CD4-positive, alpha-beta T cell (primary cell): ENCODE measurements at regions of chr11 and their contacts with region 1.

Region 1: GRCh38 chr11:47176328-47177228 is at the start of gene ARFGAP2:
- DNase-seq: peak; percentile 89 to 99 (median 95)
- ATAC-seq: peak; percentile 88
- H3K4me3 ChIP-seq: peak within 1 kb of the TSS; percentile 100
- H3K4me3 Mint-ChIP-seq: peak within 1 kb of the TSS; percentile 99
- H3K27ac ChIP-seq: peak within 1 kb of the TSS; percentile 90 to 96
- H3K27ac Mint-ChIP-seq: peak within 1 kb of the TSS; percentile 97
- H3K4me1 ChIP-seq: peaks cover 56% of the 10 kb centered on the region
- H3K4me1 Mint-ChIP-seq: peaks cover 54% of the 10 kb centered on the region
- H3K27me3 ChIP-seq: no peaks in the 10 kb centered on the region
- H3K27me3 Mint-ChIP-seq: peaks cover 5% of the 10 kb centered on the region
- CTCF ChIP-seq: no peak
- total RNA-seq, gene ARFGAP2: 161 to 174 TPM

Region 2: DNA sequence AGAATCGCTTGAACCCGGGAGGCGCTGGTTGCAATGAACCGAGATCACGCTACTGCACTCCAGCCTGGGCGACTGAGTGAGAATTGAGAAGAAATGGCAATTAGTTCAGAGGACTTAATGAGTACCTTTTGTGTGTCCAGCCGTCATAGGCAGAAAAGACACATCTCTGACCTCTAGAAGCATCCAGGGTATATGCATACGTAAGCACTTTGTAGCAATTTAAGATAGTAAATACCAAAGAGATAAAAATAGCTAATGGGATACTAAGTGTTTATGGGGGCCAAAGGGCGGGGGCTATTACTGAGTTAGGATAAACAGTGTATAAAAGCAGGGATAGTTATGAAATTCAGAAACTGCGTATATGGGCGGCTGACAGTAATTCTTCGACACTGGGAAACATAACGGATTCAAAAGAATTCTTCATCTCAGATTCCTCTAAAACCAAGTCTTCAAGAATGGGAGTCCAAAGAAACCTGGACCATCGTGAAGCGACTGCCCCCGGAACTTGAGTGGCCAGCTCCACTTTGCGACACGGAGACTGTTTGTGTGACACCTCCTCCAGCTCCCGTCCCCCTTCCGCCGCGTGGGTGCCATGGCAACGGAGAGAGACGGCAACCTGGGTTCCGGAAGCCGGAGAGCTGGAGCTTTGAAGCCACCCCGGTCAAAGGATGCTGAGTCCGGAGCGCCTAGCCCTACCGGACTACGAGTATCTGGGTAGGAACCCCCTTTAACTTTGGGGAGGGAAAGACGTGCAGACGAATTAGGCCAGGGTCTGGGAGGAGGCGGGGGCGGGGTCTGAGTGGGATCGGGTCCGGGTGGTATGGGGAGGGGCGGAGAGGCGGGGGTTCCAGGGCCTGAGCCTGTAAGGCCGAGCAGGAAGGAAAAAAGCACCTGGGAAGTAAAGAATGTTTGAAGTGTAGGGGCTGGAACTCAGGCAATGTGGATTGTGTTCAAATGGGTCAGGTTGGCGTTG is 240.2 kb before region 1 on chr11 and contains the start of gene CSTPP1:
- CTCF ChIA-PET with region 1: no interaction called
- POLR2A ChIA-PET with region 1: no interaction called
- intact Hi-C with region 1: loop called in 1 of 2 experiments (anchors 2 kb)
- DNase-seq: peak; percentile 87 to 95 (median 92)
- ATAC-seq: peak; percentile 96
- H3K4me3 ChIP-seq: peak within 1 kb of the TSS; percentile 73
- H3K4me3 Mint-ChIP-seq: peak within 1 kb of the TSS; percentile 91
- H3K27ac ChIP-seq: peak within 1 kb of the TSS; percentile 28 to 39
- H3K27ac Mint-ChIP-seq: peak within 1 kb of the TSS; percentile 83
- H3K4me1 ChIP-seq: peaks cover 18% of the 10 kb centered on the region
- H3K4me1 Mint-ChIP-seq: peaks cover 22% of the 10 kb centered on the region
- H3K27me3 ChIP-seq: peaks cover 0 to 3% of the 10 kb centered on the region in 2 experiments
- H3K27me3 Mint-ChIP-seq: peaks cover 8% of the 10 kb centered on the region
- CTCF ChIP-seq: no peak
- total RNA-seq, gene CSTPP1: 6.6 to 7.3 TPM

Region 3: GRCh38 chr11:47056261-47056915 is 120.2 kb before region 1 on chr11:
- CTCF ChIA-PET with region 1: no interaction called
- POLR2A ChIA-PET with region 1: no interaction called
- intact Hi-C with region 1: no loop called
- DNase-seq: no peak
- ATAC-seq: no peak
- H3K4me3 ChIP-seq: no peak overlapping the region
- H3K4me3 Mint-ChIP-seq: no peak overlapping the region
- H3K27ac ChIP-seq: no peak overlapping the region
- H3K27ac Mint-ChIP-seq: no peak overlapping the region
- H3K4me1 ChIP-seq: no peaks in the 10 kb centered on the region
- H3K4me1 Mint-ChIP-seq: no peaks in the 10 kb centered on the region
- H3K27me3 ChIP-seq: no peaks in the 10 kb centered on the region
- H3K27me3 Mint-ChIP-seq: no peaks in the 10 kb centered on the region
- CTCF ChIP-seq: no peak

Region 4: DNA sequence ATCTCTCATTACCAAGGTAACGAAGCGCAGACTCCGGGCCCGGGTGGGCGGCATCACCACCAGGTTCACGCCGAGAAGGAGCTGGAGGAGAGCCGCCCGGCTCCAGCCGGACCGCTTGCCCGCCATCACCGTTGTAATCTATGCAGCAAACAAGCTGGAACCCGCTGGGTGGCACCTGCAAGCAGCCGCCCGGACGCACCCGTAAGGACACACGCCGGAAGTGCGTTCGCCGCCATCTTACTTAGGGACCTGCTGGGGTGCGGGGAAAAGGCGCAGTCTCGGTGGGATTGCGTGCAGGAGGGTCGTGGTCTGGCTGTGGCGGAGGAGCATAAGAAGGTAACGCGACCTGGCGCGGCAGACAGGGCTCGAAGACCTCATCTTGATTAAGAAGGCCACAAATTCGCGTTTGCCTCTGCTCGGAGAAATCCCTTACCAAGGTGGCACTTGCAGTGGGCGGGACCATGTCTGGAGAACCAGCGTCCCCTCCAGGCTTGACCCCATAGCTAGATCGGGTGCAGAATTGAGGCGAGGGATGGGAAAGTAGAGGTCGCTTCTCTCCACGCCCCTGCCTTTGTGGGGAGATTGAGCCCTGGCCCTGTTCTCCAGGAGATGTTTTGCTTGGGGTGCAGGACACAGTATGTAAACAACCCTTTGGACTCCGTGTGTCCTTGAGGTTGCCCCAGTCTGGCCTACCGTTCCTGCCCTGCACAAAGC is 72.2 kb after region 1 on chr11 and contains the start of gene ACP2:
- CTCF ChIA-PET with region 1: no interaction called
- POLR2A ChIA-PET with region 1: interaction called, 15 read pairs
- intact Hi-C with region 1: loop called in 1 of 2 experiments (anchors 5 kb)
- DNase-seq: peak; percentile 78 to 93 (median 82)
- ATAC-seq: peak; percentile 97
- H3K4me3 ChIP-seq: peak within 1 kb of the TSS; percentile 77
- H3K4me3 Mint-ChIP-seq: peak within 1 kb of the TSS; percentile 94
- H3K27ac ChIP-seq: peak within 1 kb of the TSS; percentile 75 to 82
- H3K27ac Mint-ChIP-seq: peak within 1 kb of the TSS; percentile 93
- H3K4me1 ChIP-seq: peaks cover 28% of the 10 kb centered on the region
- H3K4me1 Mint-ChIP-seq: peaks cover 29% of the 10 kb centered on the region
- H3K27me3 ChIP-seq: no peaks in the 10 kb centered on the region
- H3K27me3 Mint-ChIP-seq: no peaks in the 10 kb centered on the region
- CTCF ChIP-seq: no peak
- total RNA-seq, gene ACP2: 16.8 to 17.2 TPM

Region 5: DNA sequence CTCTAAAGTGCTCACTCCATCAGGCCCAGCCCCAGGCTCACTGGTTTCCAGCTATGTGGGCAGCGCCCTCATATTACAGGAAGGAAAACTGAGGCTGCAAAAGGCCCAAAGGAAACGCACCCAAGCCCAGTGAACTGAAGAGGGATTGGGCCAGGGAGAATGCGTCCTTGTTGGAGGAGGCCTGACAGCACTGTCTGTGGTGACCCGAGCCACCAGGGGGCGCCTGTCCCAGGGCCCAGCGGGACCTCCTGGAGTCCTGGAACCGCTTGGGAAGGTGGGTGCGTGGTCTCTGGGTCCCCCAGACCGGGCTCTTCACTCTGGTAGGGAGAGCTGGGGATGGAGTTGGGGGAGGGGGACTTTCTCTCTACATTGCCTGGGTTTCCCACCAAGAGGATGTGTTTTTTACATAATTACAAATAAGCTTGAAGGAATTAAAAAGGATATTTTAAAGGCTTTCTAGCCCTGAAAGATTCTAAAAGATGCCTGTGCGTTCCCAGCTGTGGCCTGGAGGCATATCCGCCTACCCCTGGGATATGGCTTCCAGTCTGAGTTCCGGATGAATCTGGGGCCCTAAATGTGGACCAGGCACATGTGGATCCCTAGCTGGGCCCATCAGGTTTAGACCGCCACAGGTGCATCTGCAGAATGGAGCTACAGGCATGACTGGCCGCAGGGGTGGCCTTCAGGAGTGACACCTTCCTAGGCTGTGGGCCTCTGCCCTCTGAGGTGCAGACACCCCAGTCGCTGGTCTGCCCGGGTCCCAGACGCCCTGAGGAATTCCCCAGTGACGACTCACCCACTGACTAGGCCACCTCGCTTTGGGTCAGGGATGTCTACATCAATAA is 197.5 kb after region 1 on chr11:
- CTCF ChIA-PET with region 1: no interaction called
- POLR2A ChIA-PET with region 1: no interaction called
- intact Hi-C with region 1: no loop called
- DNase-seq: peak; percentile 73 to 93 (median 84)
- ATAC-seq: peak; percentile 95
- H3K4me3 ChIP-seq: no peak overlapping the region
- H3K4me3 Mint-ChIP-seq: no peak overlapping the region
- H3K27ac ChIP-seq: no peak overlapping the region
- H3K27ac Mint-ChIP-seq: no peak overlapping the region
- H3K4me1 ChIP-seq: peaks cover 13% of the 10 kb centered on the region
- H3K4me1 Mint-ChIP-seq: no peaks in the 10 kb centered on the region
- H3K27me3 ChIP-seq: no peaks in the 10 kb centered on the region
- H3K27me3 Mint-ChIP-seq: no peaks in the 10 kb centered on the region
- CTCF ChIP-seq: peak; percentile 93

Region 6: DNA sequence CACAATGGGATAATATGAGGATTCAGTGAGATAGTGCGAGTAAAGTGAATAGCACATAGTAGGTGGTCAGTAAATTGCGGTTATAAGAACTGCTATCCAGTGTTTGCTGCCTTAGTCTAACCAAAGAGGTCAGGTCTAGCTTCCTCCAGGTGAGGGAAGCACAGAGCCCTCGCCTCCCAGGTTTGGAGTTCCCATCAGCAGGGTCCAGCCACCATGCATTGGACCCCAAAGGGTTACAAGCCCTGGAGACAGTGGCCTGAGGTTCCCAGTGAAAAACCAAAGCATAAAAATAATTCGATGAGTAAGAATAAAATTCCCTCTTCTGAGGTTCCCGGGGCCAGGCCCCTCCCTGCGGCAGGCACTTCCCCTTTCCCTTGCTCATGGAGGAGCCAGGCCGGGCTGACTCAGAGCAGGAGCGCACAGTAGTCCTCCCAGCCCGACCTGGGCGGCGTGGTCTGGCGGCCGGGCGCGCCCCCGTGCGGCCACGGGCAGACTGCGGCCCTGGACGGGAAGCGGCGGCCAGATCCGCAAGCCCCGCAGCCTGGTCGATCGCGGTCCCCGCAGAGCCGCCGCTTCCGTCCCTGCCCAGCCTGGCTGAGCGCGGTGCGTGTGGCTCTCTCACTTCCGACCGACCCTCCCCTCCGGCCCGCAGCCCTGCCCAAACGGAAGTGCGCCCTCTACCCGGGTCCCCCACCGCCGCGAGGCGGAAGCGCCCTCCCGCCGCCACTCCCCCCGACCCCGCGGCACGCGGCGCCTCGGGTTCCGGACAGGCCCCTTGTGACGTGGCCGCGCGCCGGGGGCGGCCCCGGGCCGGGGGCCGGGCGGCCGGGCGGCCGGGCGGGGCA is 231.4 kb after region 1 on chr11 and contains the start of gene SLC39A13:
- CTCF ChIA-PET with region 1: no interaction called
- POLR2A ChIA-PET with region 1: interaction called, 3 read pairs
- intact Hi-C with region 1: loop called in 1 of 2 experiments (anchors 5 kb)
- DNase-seq: peak; percentile 78 to 95 (median 89)
- ATAC-seq: peak; percentile 86
- H3K4me3 ChIP-seq: peak within 1 kb of the TSS; percentile 74
- H3K4me3 Mint-ChIP-seq: peak within 1 kb of the TSS; percentile 99
- H3K27ac ChIP-seq: peak within 1 kb of the TSS; percentile 84 to 88
- H3K27ac Mint-ChIP-seq: peak within 1 kb of the TSS; percentile 95
- H3K4me1 ChIP-seq: peaks cover 40% of the 10 kb centered on the region
- H3K4me1 Mint-ChIP-seq: peaks cover 17% of the 10 kb centered on the region
- H3K27me3 ChIP-seq: no peaks in the 10 kb centered on the region
- H3K27me3 Mint-ChIP-seq: no peaks in the 10 kb centered on the region
- CTCF ChIP-seq: peak; percentile 84
- total RNA-seq, gene SLC39A13: 36.6 to 39.2 TPM

Region 7: GRCh38 chr11:47642099-47642855 is 465.7 kb after region 1 on chr11 and contains the start of gene MTCH2:
- CTCF ChIA-PET with region 1: no interaction called
- POLR2A ChIA-PET with region 1: no interaction called
- intact Hi-C with region 1: loop called in 1 of 2 experiments (anchors 5 kb)
- DNase-seq: peak; percentile 91 to 99 (median 95)
- ATAC-seq: peak; percentile 92
- H3K4me3 ChIP-seq: peak within 1 kb of the TSS; percentile 96
- H3K4me3 Mint-ChIP-seq: peak within 1 kb of the TSS; percentile 90
- H3K27ac ChIP-seq: peak within 1 kb of the TSS; percentile 88 to 91
- H3K27ac Mint-ChIP-seq: peak within 1 kb of the TSS; percentile 89
- H3K4me1 ChIP-seq: peaks cover 28% of the 10 kb centered on the region
- H3K4me1 Mint-ChIP-seq: peaks cover 26% of the 10 kb centered on the region
- H3K27me3 ChIP-seq: no peaks in the 10 kb centered on the region
- H3K27me3 Mint-ChIP-seq: no peaks in the 10 kb centered on the region
- CTCF ChIP-seq: peak; percentile 6
- total RNA-seq, gene MTCH2: 11.8 to 12.7 TPM